Adrenal gland (tissue), 19 donors: ENCODE measurements at regions of chr7 and their contacts with region 1.

Region 1: DNA sequence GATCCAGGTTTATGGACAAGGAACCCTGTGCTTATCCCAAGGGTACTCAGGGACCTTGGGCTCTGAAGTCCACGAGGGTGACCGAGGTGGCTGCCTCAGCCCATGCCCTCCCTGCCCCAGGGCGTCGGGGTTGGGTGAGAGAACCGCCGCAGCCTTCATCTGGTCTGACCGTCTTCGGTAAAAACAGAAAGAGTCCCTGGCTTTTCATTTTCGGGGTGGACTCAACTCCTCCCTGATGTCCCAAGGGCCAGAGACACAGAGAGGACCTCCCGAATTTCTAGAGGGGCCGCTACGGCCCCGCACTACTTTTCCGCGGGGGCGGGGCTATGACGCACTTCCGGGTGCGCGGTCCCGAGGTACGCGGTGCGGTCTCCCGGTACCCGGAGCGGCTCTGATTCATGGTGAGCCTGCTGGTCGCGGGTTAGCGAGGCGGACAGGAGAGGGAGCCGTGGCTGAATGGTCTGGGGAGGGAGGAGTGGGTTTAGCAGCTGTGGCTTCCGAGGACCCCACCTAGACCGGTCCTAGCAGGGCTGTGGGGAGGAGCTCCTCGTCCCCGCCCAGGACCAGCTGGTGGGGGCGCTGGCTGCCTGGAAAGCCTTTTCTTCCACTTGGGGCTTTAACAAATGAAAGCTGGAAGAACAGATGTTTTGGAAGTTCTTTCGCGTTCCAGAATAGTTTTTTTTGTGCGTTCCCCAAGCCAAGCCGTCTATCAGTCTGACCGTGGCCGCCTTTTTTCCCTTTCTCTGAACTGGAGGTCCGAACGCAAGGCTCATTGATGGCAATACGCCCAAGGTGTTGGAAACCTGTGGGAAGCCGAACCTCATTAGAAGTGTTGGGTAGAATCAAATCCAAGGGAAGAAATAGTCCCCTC is at the start of gene ZSCAN21:
- DNase-seq: peak; percentile 84 to 91 (median 88)
- H3K4me3 ChIP-seq: peak within 1 kb of the TSS; percentile 20 to 76 (median 58)
- H3K27ac ChIP-seq: peak within 1 kb of the TSS; percentile 80 to 99 (median 96)
- H3K4me1 ChIP-seq: peaks cover 3 to 9% of the 10 kb centered on the region in 2 donors
- H3K27me3 ChIP-seq: no peaks in the 10 kb centered on the region
- CTCF ChIP-seq: peak in 2 of 6 experiments; percentile 9 to 15
- POLR2A ChIP-seq: peak; percentile 46 to 95
- total RNA-seq, gene ZSCAN21: 10.0 to 22.7 (median 14.7) TPM

Region 2: GRCh38 chr7:99997545-99998137 is 52.0 kb before region 1 on chr7:
- intact Hi-C with region 1: loop called (anchors 5 to 10 kb)
- DNase-seq: peak in 3 of 7 donors; percentile 34 to 63 (median 47)
- H3K4me3 ChIP-seq: peak overlapping the region in 1 of 4 donors; percentile 38
- H3K27ac ChIP-seq: peak overlapping the region in 4 of 5 donors; percentile 26 to 74 (median 52)
- H3K4me1 ChIP-seq: peaks cover 0 to 4% of the 10 kb centered on the region in 2 donors
- H3K27me3 ChIP-seq: no peaks in the 10 kb centered on the region
- CTCF ChIP-seq: peak in 5 of 6 experiments; percentile 19 to 52 (median 27)
- POLR2A ChIP-seq: peak in 1 of 2 donors; percentile 21

Region 3: GRCh38 chr7:100013328-100013676 is 36.4 kb before region 1 on chr7:
- intact Hi-C with region 1: loop called in 1 of 2 experiments (anchors 5 kb)
- DNase-seq: no peak
- H3K4me3 ChIP-seq: no peak overlapping the region
- H3K27ac ChIP-seq: no peak overlapping the region
- H3K4me1 ChIP-seq: peaks cover 14 to 25% of the 10 kb centered on the region in 2 donors
- H3K27me3 ChIP-seq: no peaks in the 10 kb centered on the region
- CTCF ChIP-seq: no peak
- POLR2A ChIP-seq: no peak